CD4-positive, alpha-beta memory T cell (primary cell): ENCODE measurements at regions of chr22 and their contacts with region 1.

Region 1: GRCh38 chr22:30005213-30005857 is 74.9 kb upstream of the HORMAD2 start:
- DNase-seq: peak; percentile 45 to 53 (median 52)
- H3K4me3 ChIP-seq: no peak overlapping the region
- H3K4me3 Mint-ChIP-seq: no peak overlapping the region
- H3K27ac ChIP-seq: no peak overlapping the region
- H3K27ac Mint-ChIP-seq: peak overlapping the region in 3 of 7 donors; percentile 2 to 60 (median 30)
- H3K4me1 ChIP-seq: no peaks in the 10 kb centered on the region
- H3K4me1 Mint-ChIP-seq: peaks cover 0 to 5% (median 3%) of the 10 kb centered on the region in 4 donors
- H3K27me3 ChIP-seq: no peaks in the 10 kb centered on the region
- H3K27me3 Mint-ChIP-seq: no peaks in the 10 kb centered on the region

Region 2: DNA sequence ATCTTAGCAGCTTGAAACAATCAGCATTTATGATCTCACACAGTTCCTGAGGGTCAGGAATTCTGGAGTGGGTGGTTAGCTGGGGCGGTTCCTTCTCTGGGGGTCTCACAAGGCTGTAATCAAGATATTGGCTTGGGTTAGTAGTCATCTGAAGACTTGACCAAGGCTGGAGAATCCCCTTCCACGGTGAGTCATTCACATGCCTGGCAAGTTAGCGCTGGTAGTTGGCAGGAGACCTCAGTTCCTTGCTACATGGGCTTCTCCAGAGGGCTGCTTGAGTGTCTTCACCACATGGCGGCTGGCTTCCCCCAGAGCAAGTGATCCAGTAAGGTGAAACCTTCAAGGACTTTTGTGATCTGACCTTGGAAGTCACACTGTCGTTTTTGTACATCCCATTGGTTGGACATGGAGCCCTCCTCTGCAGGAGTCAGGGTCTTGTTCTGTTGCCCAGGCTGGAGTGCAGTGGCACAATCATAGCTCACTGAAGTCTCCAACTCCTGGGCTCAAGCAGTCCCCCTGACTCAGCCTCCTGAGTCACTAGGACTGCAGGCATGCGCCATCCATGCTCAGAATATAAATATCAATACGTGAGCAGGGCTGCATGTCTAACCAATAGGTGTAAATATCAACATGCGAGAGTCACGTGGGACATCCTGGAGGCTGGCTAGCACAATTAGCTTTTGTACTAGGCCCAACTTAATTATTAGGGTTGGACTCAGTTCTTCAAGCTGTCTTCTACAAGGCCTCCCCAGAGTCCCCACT is 417.2 kb before region 1 on chr22:
- CTCF ChIA-PET with region 1: interaction called, 13 read pairs
- POLR2A ChIA-PET with region 1: no interaction called
- intact Hi-C with region 1: loop called (anchors 1 kb)
- DNase-seq: no peak
- H3K4me3 ChIP-seq: no peak overlapping the region
- H3K4me3 Mint-ChIP-seq: no peak overlapping the region
- H3K27ac ChIP-seq: no peak overlapping the region
- H3K27ac Mint-ChIP-seq: peak overlapping the region in 3 of 7 donors; percentile 18 to 60 (median 46)
- H3K4me1 ChIP-seq: peaks cover 8% of the 10 kb centered on the region
- H3K4me1 Mint-ChIP-seq: peaks cover 8 to 12% (median 10%) of the 10 kb centered on the region in 4 donors
- H3K27me3 ChIP-seq: no peaks in the 10 kb centered on the region
- H3K27me3 Mint-ChIP-seq: no peaks in the 10 kb centered on the region

Region 3: DNA sequence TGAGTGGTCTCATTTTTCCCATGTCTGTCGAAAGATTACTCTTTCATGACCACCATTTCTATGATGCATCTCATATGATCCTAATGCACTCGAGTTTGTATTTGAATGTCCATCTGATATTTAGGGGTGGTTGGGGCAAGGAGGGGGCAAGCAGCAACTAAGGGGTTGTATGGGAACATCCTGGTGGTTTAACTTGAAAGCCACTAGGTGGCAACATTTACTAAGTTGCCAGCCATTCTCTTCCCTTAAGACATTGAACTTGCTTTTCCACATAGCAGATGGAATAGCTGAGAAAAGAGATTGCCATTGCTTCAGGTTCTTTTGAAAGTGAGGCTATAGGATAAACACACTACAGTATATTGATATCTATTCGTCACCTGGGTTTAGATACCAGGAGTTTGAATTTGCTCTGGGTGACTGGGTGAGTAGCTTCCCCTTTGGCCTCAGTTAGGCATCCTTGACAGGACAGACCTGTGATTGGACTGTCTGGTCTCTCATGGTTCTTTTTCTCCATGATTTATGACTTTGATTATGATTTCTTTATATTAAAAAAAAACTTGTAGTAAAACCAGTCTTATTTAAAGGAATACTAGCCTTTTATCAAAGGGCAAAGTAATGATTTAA is 369.5 kb before region 1 on chr22:
- CTCF ChIA-PET with region 1: interaction called, 39 read pairs
- POLR2A ChIA-PET with region 1: no interaction called
- intact Hi-C with region 1: loop called (anchors 2 kb)
- DNase-seq: peak in 3 of 5 donors; percentile 12 to 24 (median 15)
- H3K4me3 ChIP-seq: no peak overlapping the region
- H3K4me3 Mint-ChIP-seq: no peak overlapping the region
- H3K27ac ChIP-seq: no peak overlapping the region
- H3K27ac Mint-ChIP-seq: peak overlapping the region in 2 of 7 donors; percentile 10 to 64
- H3K4me1 ChIP-seq: peaks cover 5% of the 10 kb centered on the region
- H3K4me1 Mint-ChIP-seq: peaks cover 13 to 28% (median 24%) of the 10 kb centered on the region in 4 donors
- H3K27me3 ChIP-seq: no peaks in the 10 kb centered on the region
- H3K27me3 Mint-ChIP-seq: no peaks in the 10 kb centered on the region

Region 4: GRCh38 chr22:29837780-29838598 is 167.3 kb before region 1 on chr22 and contains the start of gene ASCC2:
- CTCF ChIA-PET with region 1: interaction called, 5 read pairs
- POLR2A ChIA-PET with region 1: no interaction called
- intact Hi-C with region 1: loop called (anchors 1 kb)
- DNase-seq: peak; percentile 96 to 99 (median 98)
- H3K4me3 ChIP-seq: peak within 1 kb of the TSS; percentile 80 to 89
- H3K4me3 Mint-ChIP-seq: peak within 1 kb of the TSS; percentile 93 to 99 (median 97)
- H3K27ac ChIP-seq: peak within 1 kb of the TSS; percentile 72
- H3K27ac Mint-ChIP-seq: peak within 1 kb of the TSS; percentile 94 to 99 (median 98)
- H3K4me1 ChIP-seq: peaks cover 32% of the 10 kb centered on the region
- H3K4me1 Mint-ChIP-seq: peaks cover 29 to 48% (median 35%) of the 10 kb centered on the region in 4 donors
- H3K27me3 ChIP-seq: no peaks in the 10 kb centered on the region
- H3K27me3 Mint-ChIP-seq: no peaks in the 10 kb centered on the region
- total RNA-seq, gene ASCC2: 82.3 to 88.7 TPM

Region 5: DNA sequence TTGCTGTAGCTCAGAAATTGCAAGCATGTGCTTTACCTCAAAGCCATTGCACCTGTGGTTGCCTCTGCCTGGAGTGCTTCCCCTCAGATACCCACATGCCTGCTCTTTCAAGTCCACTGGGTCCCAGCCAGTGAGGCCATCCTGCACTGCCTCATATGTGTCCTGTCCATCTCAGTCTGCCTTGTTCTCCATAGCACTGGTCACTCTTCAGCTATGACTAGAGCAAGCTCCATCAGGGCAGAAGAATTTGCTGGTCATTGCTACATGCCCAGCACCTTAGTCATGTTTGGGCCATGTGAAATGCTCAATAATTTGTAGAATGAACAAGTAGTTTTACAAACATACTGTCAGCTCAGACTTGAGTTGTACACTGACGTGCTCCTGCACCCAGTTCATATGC is 10.5 kb after region 1 on chr22:
- CTCF ChIA-PET with region 1: interaction called, 19 read pairs
- POLR2A ChIA-PET with region 1: interaction called, 3 read pairs
- intact Hi-C with region 1: no loop called
- DNase-seq: no peak
- H3K4me3 ChIP-seq: no peak overlapping the region
- H3K4me3 Mint-ChIP-seq: no peak overlapping the region
- H3K27ac ChIP-seq: no peak overlapping the region
- H3K27ac Mint-ChIP-seq: peak overlapping the region in 1 of 7 donors; percentile 46
- H3K4me1 ChIP-seq: no peaks in the 10 kb centered on the region
- H3K4me1 Mint-ChIP-seq: no peaks in the 10 kb centered on the region
- H3K27me3 ChIP-seq: no peaks in the 10 kb centered on the region
- H3K27me3 Mint-ChIP-seq: no peaks in the 10 kb centered on the region